Activated B cell treated with CpG ODN at 0.5 μM for 24 hours (primary cell): ENCODE measurements at regions of chr7 and their contacts with region 1.

Region 1: DNA sequence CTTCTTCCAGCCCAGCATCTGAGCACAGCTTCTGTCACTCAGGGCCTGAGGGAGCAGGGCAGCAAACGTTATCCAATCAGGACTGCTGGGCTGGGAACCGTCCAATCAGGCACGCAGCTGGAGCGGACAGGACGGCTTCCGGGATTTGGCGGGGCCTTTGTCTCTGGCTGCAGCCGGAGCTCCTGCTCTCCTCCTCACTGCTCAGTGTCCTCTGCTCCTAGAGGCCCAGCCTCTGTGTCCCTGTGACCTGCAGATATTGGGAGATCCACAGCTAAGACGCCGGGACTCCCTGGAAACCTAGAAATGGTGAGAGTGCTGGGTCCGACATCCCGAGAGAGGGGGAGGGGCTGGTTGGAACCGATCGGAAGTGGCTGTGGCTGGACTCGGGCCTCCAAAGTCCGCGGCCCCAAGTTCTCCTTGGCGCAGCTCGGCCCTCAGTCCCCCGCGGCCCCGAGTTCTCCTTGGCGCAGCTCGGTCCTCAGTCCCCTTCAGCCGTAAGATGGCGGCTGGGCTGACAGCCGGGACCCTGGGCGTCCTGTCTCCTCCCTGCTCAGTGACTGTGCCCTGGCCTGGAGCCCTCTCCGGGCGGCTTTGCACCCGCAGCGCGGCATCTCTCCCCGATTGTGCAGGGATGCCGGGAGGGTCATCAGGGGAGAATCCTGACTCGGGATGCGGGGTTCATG is at the start of gene ZNF107:
- DNase-seq: peak; percentile 69
- ATAC-seq: peak; percentile 93
- H3K4me3 Mint-ChIP-seq: peak within 1 kb of the TSS; percentile 98
- H3K27ac Mint-ChIP-seq: peak within 1 kb of the TSS; percentile 96
- H3K4me1 Mint-ChIP-seq: peaks cover 56% of the 10 kb centered on the region
- H3K27me3 Mint-ChIP-seq: no peaks in the 10 kb centered on the region
- CTCF ChIP-seq: no peak
- total RNA-seq, gene ZNF107: 40.3 and 50.5 TPM in 2 replicates

Region 2: DNA sequence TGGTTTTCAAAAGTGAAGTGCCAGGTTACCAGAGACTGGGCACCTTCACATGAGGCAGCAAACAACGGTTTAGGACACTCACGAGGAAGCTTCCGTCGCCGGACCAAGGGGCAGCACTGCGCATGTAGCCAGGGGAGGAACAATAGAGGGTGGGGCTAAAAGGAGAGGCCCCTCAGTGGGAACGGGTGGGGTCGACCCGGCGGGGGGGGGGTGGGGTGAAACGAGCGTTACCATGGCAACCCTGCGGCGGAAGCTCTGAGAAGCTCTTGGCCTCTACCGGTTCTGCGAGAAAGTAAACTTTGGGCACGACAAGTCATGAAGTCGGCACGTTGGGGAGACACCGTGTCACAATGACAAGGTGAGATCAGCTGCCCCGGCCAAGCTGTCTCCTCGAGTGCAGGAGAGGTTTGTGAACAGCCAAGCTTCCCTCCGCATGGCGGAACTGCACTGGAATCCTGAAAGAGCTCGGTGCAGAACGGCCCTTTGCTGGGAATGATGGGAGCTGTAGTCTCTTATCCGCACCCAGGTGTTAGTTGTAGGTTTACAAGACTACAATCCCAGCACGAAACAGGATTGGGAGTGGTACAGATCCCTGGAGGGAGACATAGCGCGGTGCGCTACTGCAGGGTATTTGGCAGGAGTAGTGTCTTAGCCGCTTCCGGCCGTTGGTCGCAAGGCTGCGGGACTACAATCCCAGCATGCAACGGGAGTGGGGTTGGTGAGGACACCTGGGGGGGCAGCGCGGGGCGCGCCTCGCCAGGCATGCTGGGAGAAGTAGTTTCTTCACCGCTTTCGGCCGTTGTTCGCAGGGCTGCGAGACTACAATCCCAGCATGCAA is 740.3 kb before region 1 on chr7:
- CTCF ChIA-PET with region 1: no interaction called
- POLR2A ChIA-PET with region 1: interaction called, 7 read pairs
- intact Hi-C with region 1: loop called (anchors 2 kb)
- DNase-seq: peak; percentile 63
- ATAC-seq: peak; percentile 89
- H3K4me3 Mint-ChIP-seq: peak overlapping the region; percentile 90
- H3K27ac Mint-ChIP-seq: peak overlapping the region; percentile 93
- H3K4me1 Mint-ChIP-seq: peaks cover 4% of the 10 kb centered on the region
- H3K27me3 Mint-ChIP-seq: no peaks in the 10 kb centered on the region
- CTCF ChIP-seq: no peak

Region 3: GRCh38 chr7:64313740-64314491 is 352.2 kb before region 1 on chr7 and contains the start of gene ZNF736:
- CTCF ChIA-PET with region 1: interaction called, 3 read pairs
- POLR2A ChIA-PET with region 1: interaction called, 5 read pairs
- intact Hi-C with region 1: loop called (anchors 2 kb)
- DNase-seq: peak; percentile 70
- ATAC-seq: peak; percentile 100
- H3K4me3 Mint-ChIP-seq: peak within 1 kb of the TSS; percentile 100
- H3K27ac Mint-ChIP-seq: peak within 1 kb of the TSS; percentile 99
- H3K4me1 Mint-ChIP-seq: peaks cover 41% of the 10 kb centered on the region
- H3K27me3 Mint-ChIP-seq: no peaks in the 10 kb centered on the region
- CTCF ChIP-seq: no peak
- total RNA-seq, gene ZNF736: 54.4 and 71.6 TPM in 2 replicates

Region 4: GRCh38 chr7:64686493-64687184 is 20.5 kb after region 1 on chr7:
- CTCF ChIA-PET with region 1: no interaction called
- POLR2A ChIA-PET with region 1: interaction called, 35 read pairs
- intact Hi-C with region 1: loop called (anchors 1 kb)
- DNase-seq: peak; percentile 29
- ATAC-seq: peak; percentile 84
- H3K4me3 Mint-ChIP-seq: peak overlapping the region; percentile 79
- H3K27ac Mint-ChIP-seq: peak overlapping the region; percentile 99
- H3K4me1 Mint-ChIP-seq: peaks cover 70% of the 10 kb centered on the region
- H3K27me3 Mint-ChIP-seq: no peaks in the 10 kb centered on the region
- CTCF ChIP-seq: no peak

Region 5: GRCh38 chr7:64794171-64794844 is 128.2 kb after region 1 on chr7 and contains the start of gene ZNF138:
- CTCF ChIA-PET with region 1: interaction called, 4 read pairs
- POLR2A ChIA-PET with region 1: interaction called, 35 read pairs
- intact Hi-C with region 1: loop called (anchors 1 kb)
- DNase-seq: peak; percentile 83
- ATAC-seq: peak; percentile 99
- H3K4me3 Mint-ChIP-seq: peak within 1 kb of the TSS; percentile 99
- H3K27ac Mint-ChIP-seq: peak within 1 kb of the TSS; percentile 98
- H3K4me1 Mint-ChIP-seq: peaks cover 27% of the 10 kb centered on the region
- H3K27me3 Mint-ChIP-seq: no peaks in the 10 kb centered on the region
- CTCF ChIP-seq: no peak
- total RNA-seq, gene ZNF138: 14.2 and 17.8 TPM in 2 replicates

Region 6: DNA sequence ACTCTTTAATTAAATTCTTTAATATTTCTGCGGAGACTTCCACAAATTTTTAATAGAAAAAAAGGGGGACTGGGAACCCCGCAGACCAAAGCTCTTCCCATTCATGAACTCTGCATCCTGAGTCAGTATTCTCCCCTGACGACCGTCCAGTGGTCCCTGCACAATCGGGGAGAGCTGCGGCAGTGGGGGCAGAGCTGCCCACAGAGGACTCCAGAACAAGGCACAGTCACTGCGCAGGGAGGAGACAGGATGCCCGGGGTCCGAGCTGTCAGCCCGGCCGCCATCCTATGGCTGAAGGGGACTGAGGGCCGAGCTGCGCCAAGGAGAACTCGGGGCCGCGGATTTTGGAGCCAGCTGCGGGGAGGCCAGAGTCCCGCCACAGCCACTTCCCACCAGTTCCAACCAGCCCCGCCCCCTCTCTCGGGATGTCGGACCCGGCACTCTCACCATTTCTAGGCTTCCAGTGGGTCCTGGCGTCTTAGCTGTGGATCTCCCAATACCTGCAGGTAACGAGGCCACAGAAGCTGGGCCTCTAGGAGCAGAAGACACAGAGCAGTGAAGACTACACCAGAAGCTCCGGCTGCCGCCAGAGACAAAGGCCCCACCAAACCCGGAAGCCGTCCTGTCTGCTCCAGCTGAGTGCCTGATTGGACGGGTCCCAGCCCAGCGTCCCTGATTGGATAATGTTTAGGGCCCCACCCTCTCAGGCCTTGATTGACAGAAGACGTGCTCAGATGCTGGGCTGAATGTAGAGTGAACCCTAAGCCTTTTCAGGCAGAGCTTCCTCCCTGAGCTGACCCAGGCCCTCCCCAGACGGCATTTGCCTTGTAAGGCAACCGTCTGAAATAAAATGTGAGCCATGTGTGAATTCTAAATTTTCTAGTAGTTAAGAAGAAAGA is 340.2 kb after region 1 on chr7 and contains the start of gene ERV3-1:
- CTCF ChIA-PET with region 1: no interaction called
- POLR2A ChIA-PET with region 1: interaction called, 20 read pairs
- intact Hi-C with region 1: loop called (anchors 1 kb)
- DNase-seq: peak; percentile 77
- ATAC-seq: peak; percentile 99
- H3K4me3 Mint-ChIP-seq: peak within 1 kb of the TSS; percentile 98
- H3K27ac Mint-ChIP-seq: peak within 1 kb of the TSS; percentile 95
- H3K4me1 Mint-ChIP-seq: peaks cover 46% of the 10 kb centered on the region
- H3K27me3 Mint-ChIP-seq: no peaks in the 10 kb centered on the region
- CTCF ChIP-seq: no peak
- total RNA-seq, gene ERV3-1: 23.2 and 24.8 TPM in 2 replicates

Region 7: DNA sequence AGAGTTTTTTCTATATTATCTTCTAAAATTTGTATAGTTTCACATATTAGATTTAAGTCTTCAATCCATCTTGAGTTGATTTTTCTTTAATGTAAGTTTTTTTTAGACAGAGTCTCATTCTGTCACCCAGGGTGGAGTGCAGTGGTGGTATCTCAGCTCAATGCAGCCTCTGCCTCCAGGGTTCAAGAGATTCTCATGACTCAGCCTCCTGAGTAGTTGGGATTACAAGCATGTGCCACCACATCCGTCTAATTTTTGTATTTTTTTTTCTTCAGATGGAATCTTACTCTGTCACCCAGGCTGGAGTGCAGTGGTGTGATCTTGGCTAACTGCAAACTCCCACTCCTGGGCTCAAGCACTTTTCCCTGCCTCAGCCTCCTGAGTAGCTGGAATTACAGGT is 564.1 kb after region 1 on chr7:
- CTCF ChIA-PET with region 1: no interaction called
- POLR2A ChIA-PET with region 1: interaction called, 13 read pairs
- intact Hi-C with region 1: no loop called
- DNase-seq: no peak
- ATAC-seq: no peak
- H3K4me3 Mint-ChIP-seq: no peak overlapping the region
- H3K27ac Mint-ChIP-seq: no peak overlapping the region
- H3K4me1 Mint-ChIP-seq: peaks cover 5% of the 10 kb centered on the region
- H3K27me3 Mint-ChIP-seq: no peaks in the 10 kb centered on the region
- CTCF ChIP-seq: no peak